PC-3 (cell line): ENCODE measurements at regions of chr17 and their contacts with region 1.

Region 1: DNA sequence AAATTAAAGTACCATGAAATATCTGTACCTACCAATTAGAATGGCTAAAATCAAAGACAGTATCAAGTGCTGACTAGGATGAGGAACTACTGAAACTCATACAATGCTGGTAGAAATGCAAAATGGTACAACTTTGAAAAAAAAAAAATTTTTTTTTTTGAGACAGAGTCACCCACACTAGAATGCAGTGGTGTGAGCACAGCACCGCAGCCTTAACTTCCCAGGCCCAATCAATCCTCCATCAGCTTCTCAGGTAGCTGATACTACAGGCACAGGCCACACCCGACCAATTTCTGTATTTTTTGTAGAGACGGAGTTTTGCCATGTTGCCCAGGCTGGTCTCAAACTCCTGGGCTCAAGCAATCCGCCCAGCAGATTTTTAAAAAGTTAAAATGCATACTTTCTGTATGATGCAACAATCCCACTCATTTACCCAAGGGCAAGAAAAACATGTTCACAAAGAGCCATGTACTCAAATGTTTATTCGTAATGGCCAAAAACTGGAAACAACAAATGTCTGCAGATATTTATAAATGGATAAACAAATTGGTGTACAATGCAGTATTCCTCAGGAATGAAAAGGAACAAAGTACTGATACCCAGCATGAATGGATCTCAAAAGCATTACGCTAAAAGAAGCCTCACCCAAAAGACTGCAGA is 8.7 kb downstream of the SMURF2 start:
- DNase-seq: peak; percentile 77
- ATAC-seq: peak; percentile 9; the same call in 1 of the 2 replicates
- H3K4me3 ChIP-seq: peak overlapping the region; percentile 37
- H3K27ac ChIP-seq: peak overlapping the region; percentile 72
- H3K4me1 ChIP-seq: peaks cover 51% of the 10 kb centered on the region
- H3K27me3 ChIP-seq: no peaks in the 10 kb centered on the region
- CTCF ChIP-seq: no peak

Region 2: GRCh38 chr17:64538508-64539130 is 114.8 kb before region 1 on chr17:
- CTCF ChIA-PET with region 1: no interaction called
- POLR2A ChIA-PET with region 1: interaction called, 5 read pairs
- intact Hi-C with region 1: loop called (anchors 1 kb)
- DNase-seq: no peak
- ATAC-seq: no peak
- H3K4me3 ChIP-seq: no peak overlapping the region
- H3K27ac ChIP-seq: no peak overlapping the region
- H3K4me1 ChIP-seq: peaks cover 16% of the 10 kb centered on the region
- H3K27me3 ChIP-seq: no peaks in the 10 kb centered on the region
- CTCF ChIP-seq: no peak

Region 3: DNA sequence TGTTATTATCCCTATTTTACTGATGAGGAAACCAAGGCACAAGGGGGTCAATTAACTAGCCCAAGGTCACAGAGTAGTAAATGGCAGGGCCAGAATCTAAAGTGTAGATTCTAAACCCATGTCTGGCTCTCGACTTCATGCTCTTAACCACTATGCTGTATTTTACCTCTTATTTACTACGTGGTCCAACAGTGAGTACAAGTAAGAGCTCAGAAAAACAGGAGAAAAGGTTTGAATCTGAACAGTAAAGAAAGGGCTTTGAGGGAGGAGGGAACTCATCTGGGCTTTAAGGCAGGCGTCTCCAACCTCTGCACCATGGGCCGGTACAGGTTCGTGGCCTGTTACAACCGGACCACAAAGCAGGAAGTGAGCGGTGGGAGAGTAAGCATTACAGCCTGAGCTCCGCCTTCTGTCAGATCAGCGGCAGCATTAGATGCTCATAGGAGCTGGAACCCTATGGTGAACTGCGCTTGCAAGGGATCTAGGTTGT is 54.2 kb before region 1 on chr17:
- CTCF ChIA-PET with region 1: no interaction called
- POLR2A ChIA-PET with region 1: no interaction called
- intact Hi-C with region 1: loop called (anchors 1 kb)
- DNase-seq: no peak
- ATAC-seq: peak; percentile 42; the same call in 1 of the 2 replicates
- H3K4me3 ChIP-seq: no peak overlapping the region
- H3K27ac ChIP-seq: no peak overlapping the region
- H3K4me1 ChIP-seq: no peaks in the 10 kb centered on the region
- H3K27me3 ChIP-seq: no peaks in the 10 kb centered on the region
- CTCF ChIP-seq: no peak

Region 4: GRCh38 chr17:64622931-64623654 is 30.4 kb before region 1 on chr17:
- CTCF ChIA-PET with region 1: no interaction called
- POLR2A ChIA-PET with region 1: interaction called, 12 read pairs
- intact Hi-C with region 1: no loop called
- DNase-seq: peak; percentile 96
- ATAC-seq: peak; percentile 97
- H3K4me3 ChIP-seq: peak overlapping the region; percentile 27; the same call in 1 of the 2 replicates
- H3K27ac ChIP-seq: peak overlapping the region; percentile 44
- H3K4me1 ChIP-seq: peaks cover 18% of the 10 kb centered on the region
- H3K27me3 ChIP-seq: no peaks in the 10 kb centered on the region
- CTCF ChIP-seq: no peak